MCF 10A (cell line): ENCODE measurements at regions of chr5 and their contacts with region 1.

Region 1: DNA sequence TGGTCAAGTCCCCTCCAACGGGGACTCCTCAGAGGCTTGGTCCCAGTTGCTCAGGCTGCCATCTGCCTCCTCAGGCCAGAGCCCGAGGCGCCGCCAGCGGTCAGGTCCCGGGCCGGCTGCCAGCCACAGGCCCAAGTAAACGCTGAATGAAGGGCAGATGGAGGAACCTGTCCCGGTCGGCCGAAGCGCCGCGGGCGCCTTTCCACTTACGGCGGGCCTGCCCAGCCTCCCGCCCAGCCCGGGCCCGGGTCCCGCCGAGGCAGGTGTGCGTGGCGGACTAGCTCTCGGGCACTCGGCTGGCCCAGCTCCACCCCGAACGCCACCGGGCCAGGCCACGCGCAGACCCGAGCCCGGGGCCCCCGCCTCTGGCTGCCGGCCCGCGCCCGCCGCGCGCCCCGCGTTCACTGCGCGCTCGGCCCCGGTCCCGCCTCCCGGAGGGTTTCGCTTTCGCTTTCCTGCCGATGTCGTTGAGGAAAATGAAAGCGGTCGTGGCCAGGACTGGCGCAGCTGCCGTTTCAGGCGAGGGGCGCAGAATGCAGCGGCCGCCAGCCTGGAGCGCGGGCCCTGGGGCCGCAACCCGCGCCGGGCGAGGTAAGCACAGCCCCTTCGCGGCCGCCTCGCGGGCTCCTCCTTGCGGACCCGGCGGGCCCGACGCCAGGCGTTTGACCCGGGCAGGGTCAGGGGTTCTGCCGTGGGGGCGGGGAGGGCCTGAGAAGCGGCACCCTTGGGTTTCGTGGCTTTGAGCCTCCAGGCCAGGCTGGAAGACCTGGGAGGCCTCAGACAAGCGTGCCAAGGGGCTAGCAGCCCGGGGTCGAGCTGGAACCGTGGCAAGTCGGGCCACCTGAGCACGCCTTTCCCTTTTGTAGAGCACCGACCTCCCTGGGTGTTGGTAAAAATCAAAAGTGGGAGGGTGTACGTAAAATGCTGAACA is 41.2 kb downstream of the SLC22A5 start:
- DNase-seq: peak; percentile 78
- H3K4me3 Mint-ChIP-seq: peak overlapping the region; percentile 80
- H3K27ac Mint-ChIP-seq: peak overlapping the region; percentile 93
- H3K4me1 Mint-ChIP-seq: peaks cover 27% of the 10 kb centered on the region
- H3K27me3 Mint-ChIP-seq: no peaks in the 10 kb centered on the region
- CTCF ChIP-seq: peak; percentile 95

Region 2: GRCh38 chr5:132363431-132364112 is 47.1 kb before region 1 on chr5:
- CTCF ChIA-PET with region 1: interaction called, 4 read pairs
- POLR2A ChIA-PET with region 1: interaction called, 10 read pairs
- intact Hi-C with region 1: no loop called
- DNase-seq: peak; percentile 99
- H3K4me3 Mint-ChIP-seq: peak overlapping the region; percentile 45
- H3K27ac Mint-ChIP-seq: peak overlapping the region; percentile 99
- H3K4me1 Mint-ChIP-seq: peaks cover 52% of the 10 kb centered on the region
- H3K27me3 Mint-ChIP-seq: no peaks in the 10 kb centered on the region
- CTCF ChIP-seq: no peak

Region 3: DNA sequence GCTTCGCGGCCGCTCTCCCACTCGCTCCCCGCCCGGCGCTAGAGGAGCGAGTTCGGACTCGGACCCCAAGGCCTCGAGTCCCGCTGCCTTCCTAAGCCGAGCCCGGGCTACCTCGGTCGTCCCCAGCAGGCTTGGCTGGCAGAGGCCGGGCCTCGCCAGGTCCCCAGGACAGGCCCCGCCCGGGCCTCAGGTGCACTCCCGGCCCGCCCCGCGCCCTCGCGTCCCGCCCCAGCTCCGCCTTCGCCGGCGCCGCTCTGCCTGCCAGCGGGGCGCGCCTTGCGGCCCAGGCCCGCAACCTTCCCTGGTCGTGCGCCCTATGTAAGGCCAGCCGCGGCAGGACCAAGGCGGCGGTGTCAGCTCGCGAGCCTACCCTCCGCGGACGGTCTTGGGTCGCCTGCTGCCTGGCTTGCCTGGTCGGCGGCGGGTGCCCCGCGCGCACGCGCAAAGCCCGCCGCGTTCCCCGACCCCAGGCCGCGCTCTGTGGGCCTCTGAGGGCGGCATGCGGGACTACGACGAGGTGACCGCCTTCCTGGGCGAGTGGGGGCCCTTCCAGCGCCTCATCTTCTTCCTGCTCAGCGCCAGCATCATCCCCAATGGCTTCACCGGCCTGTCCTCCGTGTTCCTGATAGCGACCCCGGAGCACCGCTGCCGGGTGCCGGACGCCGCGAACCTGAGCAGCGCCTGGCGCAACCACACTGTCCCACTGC is 41.1 kb before region 1 on chr5 and contains the start of gene SLC22A5:
- CTCF ChIA-PET with region 1: interaction called, 4 read pairs
- POLR2A ChIA-PET with region 1: interaction called, 13 read pairs
- intact Hi-C with region 1: no loop called
- DNase-seq: peak; percentile 84
- H3K4me3 Mint-ChIP-seq: peak within 1 kb of the TSS; percentile 79
- H3K27ac Mint-ChIP-seq: peak within 1 kb of the TSS; percentile 39
- H3K4me1 Mint-ChIP-seq: peaks cover 44% of the 10 kb centered on the region
- H3K27me3 Mint-ChIP-seq: no peaks in the 10 kb centered on the region
- CTCF ChIP-seq: no peak
- total RNA-seq, gene SLC22A5: 122 and 167 TPM in 2 replicates

Region 4: GRCh38 chr5:132378580-132378979 is 32.1 kb before region 1 on chr5:
- CTCF ChIA-PET with region 1: interaction called, 11 read pairs
- POLR2A ChIA-PET with region 1: interaction called, 3 read pairs
- intact Hi-C with region 1: no loop called
- DNase-seq: no peak
- H3K4me3 Mint-ChIP-seq: no peak overlapping the region
- H3K27ac Mint-ChIP-seq: peak overlapping the region; percentile 58
- H3K4me1 Mint-ChIP-seq: peaks cover 57% of the 10 kb centered on the region
- H3K27me3 Mint-ChIP-seq: no peaks in the 10 kb centered on the region
- CTCF ChIP-seq: no peak

Region 5: DNA sequence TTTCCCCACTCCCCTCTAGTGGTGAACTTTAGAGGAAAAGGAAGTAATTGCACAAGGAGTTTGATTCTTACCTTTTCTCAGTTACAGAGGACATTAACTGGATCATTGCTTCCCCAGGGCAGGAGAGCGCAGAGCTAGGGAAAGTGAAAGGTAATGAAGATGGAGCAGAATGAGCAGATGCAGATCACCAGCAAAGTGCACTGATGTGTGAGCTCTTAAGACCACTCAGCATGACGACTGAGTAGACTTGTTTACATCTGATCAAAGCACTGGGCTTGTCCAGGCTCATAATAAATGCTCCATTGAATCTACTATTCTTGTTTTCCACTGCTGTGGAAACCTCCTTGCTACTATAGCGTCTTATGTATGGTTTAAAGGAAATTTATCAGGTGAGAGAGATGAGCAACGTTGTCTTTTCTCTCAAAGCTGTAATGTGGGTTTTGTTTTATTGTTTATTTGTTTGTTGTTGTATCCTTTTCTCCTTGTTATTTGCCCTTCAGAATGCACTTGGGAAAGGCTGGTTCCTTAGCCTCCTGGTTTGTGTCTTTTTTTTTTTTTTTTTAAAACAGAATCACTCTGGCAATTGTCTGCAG is 16.0 kb before region 1 on chr5:
- CTCF ChIA-PET with region 1: interaction called, 58 read pairs
- POLR2A ChIA-PET with region 1: interaction called, 70 read pairs
- intact Hi-C with region 1: no loop called
- DNase-seq: no peak
- H3K4me3 Mint-ChIP-seq: no peak overlapping the region
- H3K27ac Mint-ChIP-seq: peak overlapping the region; percentile 33
- H3K4me1 Mint-ChIP-seq: peaks cover 16% of the 10 kb centered on the region
- H3K27me3 Mint-ChIP-seq: no peaks in the 10 kb centered on the region
- CTCF ChIP-seq: no peak

Region 6: DNA sequence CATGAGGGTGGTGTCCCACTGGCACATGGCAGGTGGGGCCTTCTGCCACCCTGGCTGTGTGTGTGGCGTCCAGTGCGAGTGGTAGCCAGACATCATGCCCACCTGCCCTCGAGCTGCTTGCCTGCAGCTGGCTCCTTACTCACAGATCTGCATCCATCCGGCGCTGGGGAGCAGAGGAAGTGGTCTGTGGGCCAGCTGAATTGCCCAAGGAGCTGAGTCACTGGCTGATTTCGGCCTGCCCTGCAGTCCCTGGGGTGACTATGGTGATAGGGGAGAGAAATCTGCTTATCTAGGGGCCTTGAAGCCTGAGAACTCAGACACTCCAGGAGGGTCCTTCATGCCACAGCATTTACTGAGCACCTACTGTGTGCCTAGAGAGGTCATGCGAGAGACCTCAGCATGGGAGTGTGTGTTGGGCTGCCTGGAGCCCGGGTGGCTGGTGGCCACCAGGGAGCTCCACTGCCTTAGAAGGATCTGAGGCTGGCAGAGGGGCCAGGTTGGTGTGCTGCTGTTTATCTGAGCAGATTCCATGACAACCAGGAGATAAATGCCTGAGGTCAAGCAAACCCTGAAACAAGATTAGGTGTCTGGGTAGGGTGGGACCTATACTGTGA is 15.9 kb after region 1 on chr5:
- CTCF ChIA-PET with region 1: interaction called, 11 read pairs
- POLR2A ChIA-PET with region 1: interaction called, 19 read pairs
- intact Hi-C with region 1: no loop called
- DNase-seq: peak; percentile 96
- H3K4me3 Mint-ChIP-seq: no peak overlapping the region
- H3K27ac Mint-ChIP-seq: peak overlapping the region; percentile 68
- H3K4me1 Mint-ChIP-seq: peaks cover 47% of the 10 kb centered on the region
- H3K27me3 Mint-ChIP-seq: no peaks in the 10 kb centered on the region
- CTCF ChIP-seq: peak; percentile 22

Region 7: DNA sequence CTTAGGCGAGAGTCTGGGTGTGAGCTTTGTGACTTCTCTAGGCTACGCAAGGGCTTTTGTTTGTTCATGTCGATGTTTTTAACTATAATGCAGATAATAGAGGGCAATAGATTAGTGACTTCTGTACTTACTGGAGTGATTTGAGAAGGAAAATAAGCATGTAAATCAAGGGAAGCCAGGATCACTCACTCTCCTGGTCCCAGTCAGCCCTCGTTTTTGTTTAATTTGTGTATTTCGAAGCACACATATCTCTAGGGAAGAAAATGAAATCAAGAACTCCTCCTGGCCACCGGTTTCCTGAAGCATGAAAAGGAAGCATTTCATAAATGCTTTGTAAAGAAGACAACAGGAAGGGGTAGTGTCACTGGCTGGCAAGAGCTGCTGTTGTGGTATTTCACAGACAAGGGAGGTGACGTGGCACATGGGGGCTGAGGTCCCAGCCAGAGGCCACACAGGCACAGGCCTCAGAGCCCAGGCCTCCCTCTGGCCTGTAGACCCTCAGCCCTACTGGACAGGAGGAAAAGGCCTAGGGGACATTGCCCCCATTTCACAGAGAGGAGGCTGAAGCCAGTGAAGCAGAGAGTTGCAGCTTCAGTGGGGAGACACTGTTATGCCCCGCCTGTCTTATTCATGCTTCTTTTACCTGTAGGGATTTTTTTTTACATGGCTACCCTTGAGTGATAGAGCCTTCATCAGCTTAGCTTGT is 45.7 kb after region 1 on chr5:
- CTCF ChIA-PET with region 1: interaction called, 5 read pairs
- POLR2A ChIA-PET with region 1: interaction called, 10 read pairs
- intact Hi-C with region 1: no loop called
- DNase-seq: no peak
- H3K4me3 Mint-ChIP-seq: no peak overlapping the region
- H3K27ac Mint-ChIP-seq: peak overlapping the region; percentile 60
- H3K4me1 Mint-ChIP-seq: peaks cover 47% of the 10 kb centered on the region
- H3K27me3 Mint-ChIP-seq: no peaks in the 10 kb centered on the region
- CTCF ChIP-seq: no peak

Region 8: GRCh38 chr5:132540764-132541163 is 130.0 kb after region 1 on chr5:
- CTCF ChIA-PET with region 1: no interaction called
- POLR2A ChIA-PET with region 1: no interaction called
- intact Hi-C with region 1: no loop called
- DNase-seq: no peak
- H3K4me3 Mint-ChIP-seq: no peak overlapping the region
- H3K27ac Mint-ChIP-seq: no peak overlapping the region
- H3K4me1 Mint-ChIP-seq: no peaks in the 10 kb centered on the region
- H3K27me3 Mint-ChIP-seq: peaks cover 54% of the 10 kb centered on the region
- CTCF ChIP-seq: no peak